Dorsolateral prefrontal cortex (tissue), 120 donors: ENCODE measurements at regions of chr9 and their contacts with region 1.

Region 1: DNA sequence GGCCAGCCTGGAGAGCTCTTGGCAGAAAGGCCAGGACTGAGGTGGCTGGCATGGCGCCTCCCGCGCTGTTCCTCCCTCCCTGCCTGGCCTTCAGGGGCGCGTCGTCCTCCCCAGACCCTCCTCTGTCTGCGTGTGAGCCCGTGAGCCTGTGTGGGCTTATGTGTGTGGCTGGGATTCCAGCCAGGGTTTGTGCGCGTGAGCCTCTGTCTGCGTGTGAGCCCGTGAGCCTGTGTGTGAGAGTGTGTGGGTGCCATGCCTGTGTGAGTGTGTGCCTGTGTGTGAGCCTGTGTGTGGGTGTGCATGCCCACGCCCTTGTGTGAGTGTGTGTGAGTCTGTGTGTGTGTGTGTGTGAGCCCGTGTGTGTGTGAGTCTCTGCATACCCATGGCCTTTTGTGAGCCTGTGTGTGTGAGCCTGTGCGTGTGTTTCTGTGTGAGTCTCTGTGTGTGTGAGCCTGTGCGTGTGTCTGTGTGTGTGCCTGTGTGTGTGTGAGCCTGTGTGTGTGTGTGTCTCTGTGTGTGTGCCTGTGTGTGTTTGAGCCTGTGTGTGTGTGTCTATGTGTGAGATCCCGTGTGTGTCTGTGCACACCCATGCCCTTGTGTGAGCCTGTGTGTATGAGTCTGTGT is 13.0 kb downstream of the RXRA start:
- DNase-seq: peak in 1 of 10 donors; percentile 29
- H3K4me3 ChIP-seq: peak overlapping the region in 38 of 59 donors; percentile 1 to 54 (median 31)
- H3K27ac ChIP-seq: peak overlapping the region in 36 of 59 donors; percentile 6 to 77 (median 46)
- H3K27me3 ChIP-seq: no peaks in the 10 kb centered on the region
- CTCF ChIP-seq: no peak

Region 2: GRCh38 chr9:134088063-134088725 is 251.1 kb before region 1 on chr9:
- intact Hi-C with region 1: no loop called
- DNase-seq: no peak
- H3K4me3 ChIP-seq: no peak overlapping the region
- H3K27ac ChIP-seq: no peak overlapping the region
- H3K27me3 ChIP-seq: peaks cover 0 to 3% (median 0%) of the 10 kb centered on the region in 45 donors
- CTCF ChIP-seq: no peak

Region 3: DNA sequence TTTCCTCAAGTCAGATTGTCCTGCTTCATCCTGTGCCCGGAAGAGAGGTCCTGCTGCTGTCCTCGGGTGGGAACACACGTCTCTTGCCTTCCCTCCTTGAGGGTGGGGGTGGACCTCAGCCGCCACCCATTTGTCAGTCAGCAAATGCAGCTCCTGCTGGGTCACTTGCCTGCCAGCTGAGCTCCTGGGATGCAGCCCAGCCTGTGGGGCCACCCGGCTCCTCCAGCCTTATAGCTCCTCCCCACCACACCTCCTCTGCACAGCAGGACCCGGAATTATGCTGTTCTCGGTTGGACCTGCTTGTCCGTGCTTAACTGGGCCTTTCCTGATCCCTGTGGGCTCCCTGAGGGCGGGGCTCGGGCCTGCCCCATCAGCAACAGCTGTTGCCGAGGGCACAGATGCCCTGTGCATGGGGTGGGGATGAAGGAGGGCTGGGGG is 39.6 kb after region 1 on chr9:
- intact Hi-C with region 1: loop called in 1 of 2 experiments (anchors 5 kb)
- DNase-seq: peak in 3 of 10 donors; percentile 64 to 68 (median 67)
- H3K4me3 ChIP-seq: peak overlapping the region in 5 of 59 donors; percentile 2 to 24 (median 9)
- H3K27ac ChIP-seq: peak overlapping the region in 49 of 59 donors; percentile 5 to 88 (median 60)
- H3K27me3 ChIP-seq: no peaks in the 10 kb centered on the region
- CTCF ChIP-seq: no peak